Transverse colon (tissue), 4 donors: ENCODE measurements at regions of chr4 and their contacts with region 1.

Region 1: GRCh38 chr4:159102622-159103383 is at the start of gene RAPGEF2:
- DNase-seq: peak; percentile 94
- H3K4me3 ChIP-seq: peak within 1 kb of the TSS; percentile 93 to 99 (median 95)
- H3K27ac ChIP-seq: peak within 1 kb of the TSS; percentile 97 to 100 (median 98)
- H3K4me1 ChIP-seq: peaks cover 7 to 37% (median 17%) of the 10 kb centered on the region in 4 donors
- H3K27me3 ChIP-seq: no peaks in the 10 kb centered on the region
- CTCF ChIP-seq: peak in 1 of 5 experiments; percentile 6
- EP300 ChIP-seq: no peak
- POLR2A ChIP-seq: peak; percentile 96
- total RNA-seq, gene RAPGEF2: 23.3 to 64.8 (median 49.6) TPM

Region 2: GRCh38 chr4:158521484-158522088 is 581.2 kb before region 1 on chr4 and contains the start of gene RXFP1:
- in situ Hi-C with region 1: no loop called
- intact Hi-C with region 1: no loop called
- DNase-seq: no peak
- H3K4me3 ChIP-seq: no peak within 1 kb of the TSS
- H3K27ac ChIP-seq: no peak within 1 kb of the TSS
- H3K4me1 ChIP-seq: no peaks in the 10 kb centered on the region
- H3K27me3 ChIP-seq: no peaks in the 10 kb centered on the region
- CTCF ChIP-seq: no peak
- EP300 ChIP-seq: no peak
- POLR2A ChIP-seq: no peak
- total RNA-seq, gene RXFP1: 0.16 TPM in 1 of 4 donors, not detected in the others

Region 3: DNA sequence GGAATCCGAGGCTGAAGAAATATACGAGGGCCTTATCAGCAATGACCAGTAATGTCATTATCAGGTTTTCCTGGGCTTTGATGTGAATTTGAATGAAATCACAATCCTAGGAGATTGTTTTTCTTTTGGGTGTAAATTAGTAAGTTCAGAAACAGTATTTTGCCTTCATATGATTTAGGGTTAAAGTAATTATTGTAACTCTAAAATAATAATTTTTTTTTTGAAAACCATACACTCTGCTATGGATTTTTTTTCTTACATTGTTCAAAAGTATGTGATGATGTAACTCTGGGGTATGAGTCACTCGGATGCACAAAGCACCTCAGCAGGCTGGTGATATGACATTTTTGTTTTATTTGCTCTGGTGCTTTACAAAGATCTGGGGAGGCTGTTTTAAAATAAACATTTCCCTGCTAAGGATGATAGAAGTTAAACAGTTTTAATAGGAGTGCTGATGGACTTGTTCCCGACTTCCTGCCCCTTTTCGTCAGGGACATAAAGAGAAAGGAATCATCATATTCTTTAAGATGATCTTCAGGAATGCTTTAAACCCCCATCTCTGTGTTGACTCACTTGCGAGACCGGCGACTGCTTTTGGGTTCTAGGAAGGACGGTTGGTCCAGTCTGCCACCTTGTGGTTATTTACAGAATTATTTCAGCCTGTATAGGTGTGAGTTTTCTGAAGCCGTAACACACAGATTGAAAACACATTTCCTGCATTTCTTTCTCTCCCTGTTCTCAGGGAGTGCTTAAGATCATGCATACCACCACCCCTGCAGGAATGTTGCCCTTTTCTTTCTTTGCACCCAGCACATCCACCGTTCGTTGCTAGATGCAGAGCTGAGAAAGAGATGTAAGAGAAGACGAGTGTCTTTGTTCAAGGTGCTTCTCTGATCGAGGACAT is 72.5 kb after region 1 on chr4:
- in situ Hi-C with region 1: no loop called
- intact Hi-C with region 1: loop called (anchors 10 kb)
- DNase-seq: peak; percentile 62
- H3K4me3 ChIP-seq: no peak overlapping the region
- H3K27ac ChIP-seq: peak overlapping the region in 3 of 4 donors; percentile 45 to 62 (median 57)
- H3K4me1 ChIP-seq: peaks cover 6 to 68% (median 19%) of the 10 kb centered on the region in 4 donors
- H3K27me3 ChIP-seq: no peaks in the 10 kb centered on the region
- CTCF ChIP-seq: peak; percentile 77 to 92 (median 85)
- EP300 ChIP-seq: no peak
- POLR2A ChIP-seq: no peak

Region 4: GRCh38 chr4:159283696-159284492 is 181.1 kb after region 1 on chr4:
- in situ Hi-C with region 1: no loop called
- intact Hi-C with region 1: no loop called
- DNase-seq: no peak
- H3K4me3 ChIP-seq: no peak overlapping the region
- H3K27ac ChIP-seq: no peak overlapping the region
- H3K4me1 ChIP-seq: peaks cover 6 to 32% (median 15%) of the 10 kb centered on the region in 4 donors
- H3K27me3 ChIP-seq: no peaks in the 10 kb centered on the region
- CTCF ChIP-seq: no peak
- EP300 ChIP-seq: no peak
- POLR2A ChIP-seq: no peak

Region 5: DNA sequence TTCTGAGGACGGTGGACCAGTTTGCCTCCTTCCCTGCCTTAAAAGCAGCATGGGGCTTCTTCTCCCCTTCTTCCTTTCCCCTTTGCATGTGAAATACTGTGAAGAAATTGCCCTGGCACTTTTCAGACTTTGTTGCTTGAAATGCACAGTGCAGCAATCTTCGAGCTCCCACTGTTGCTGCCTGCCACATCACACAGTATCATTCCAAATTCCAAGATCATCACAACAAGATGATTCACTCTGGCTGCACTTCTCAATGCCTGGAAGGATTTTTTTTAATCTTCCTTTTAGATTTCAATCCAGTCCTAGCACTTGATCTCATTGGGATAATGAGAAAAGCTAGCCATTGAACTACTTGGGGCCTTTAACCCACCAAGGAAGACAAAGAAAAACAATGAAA is 255.4 kb after region 1 on chr4:
- in situ Hi-C with region 1: no loop called
- intact Hi-C with region 1: no loop called
- DNase-seq: no peak
- H3K4me3 ChIP-seq: no peak overlapping the region
- H3K27ac ChIP-seq: peak overlapping the region in 1 of 4 donors; percentile 1
- H3K4me1 ChIP-seq: no peaks in the 10 kb centered on the region
- H3K27me3 ChIP-seq: no peaks in the 10 kb centered on the region
- CTCF ChIP-seq: no peak
- EP300 ChIP-seq: no peak
- POLR2A ChIP-seq: no peak